HEK293T (cell line): ENCODE measurements at regions of chr19 and their contacts with region 1.

Region 1: GRCh38 chr19:50922317-50922853 is 11.2 kb upstream of the KLK4 start:
- DNase-seq: peak; percentile 89

Region 2: GRCh38 chr19:50794439-50795237 is 127.7 kb before region 1 on chr19:
- CTCF ChIA-PET with region 1: interaction called, 5 read pairs
- POLR2A ChIA-PET with region 1: interaction called, 13 read pairs
- DNase-seq: no peak

Region 3: GRCh38 chr19:51282335-51282734 is 359.9 kb after region 1 on chr19:
- CTCF ChIA-PET with region 1: no interaction called
- POLR2A ChIA-PET with region 1: no interaction called
- DNase-seq: no peak